ENCODE measurements at regions of chr3 and their contacts with region 1.

Region 1: GRCh38 chr3:49454458-49454857 is 15.6 kb upstream of the DAG1 start:
- DNase-seq: peak in 1 of 14 experiments; percentile 7
- ATAC-seq: no peak
- H3K4me3 ChIP-seq: no peak overlapping the region
- H3K4me3 Mint-ChIP-seq: no peak overlapping the region
- H3K27ac ChIP-seq: no peak overlapping the region
- H3K27ac Mint-ChIP-seq: no peak overlapping the region
- H3K4me1 ChIP-seq: no peaks in the 10 kb centered on the region
- H3K4me1 Mint-ChIP-seq: no peaks in the 10 kb centered on the region
- H3K27me3 ChIP-seq: no peaks in the 10 kb centered on the region
- H3K27me3 Mint-ChIP-seq: no peaks in the 10 kb centered on the region
- CTCF ChIP-seq: no peak

Region 2: DNA sequence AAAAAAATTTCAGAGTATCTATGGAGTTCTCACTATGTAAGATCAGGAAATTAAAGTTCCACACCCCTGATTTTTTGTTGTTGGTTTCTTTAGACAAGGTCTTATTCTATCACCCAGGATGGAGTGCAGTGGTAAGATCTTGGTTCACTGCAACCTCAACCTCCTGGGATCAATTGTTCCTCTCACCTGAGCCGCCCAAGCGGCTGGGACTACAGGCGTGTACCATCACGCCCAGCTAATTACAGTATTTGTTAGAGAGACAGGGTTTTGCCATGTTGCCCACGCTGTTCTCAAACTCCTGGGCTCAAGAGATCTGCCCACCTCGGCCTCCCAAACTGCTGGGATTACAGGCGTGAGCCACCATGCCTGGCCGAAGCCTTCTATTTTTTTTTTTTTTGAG is 373.0 kb before region 1 on chr3:
- CTCF ChIA-PET with region 1: no interaction called
- POLR2A ChIA-PET with region 1: no interaction called
- intact Hi-C with region 1: no loop called
- DNase-seq: no peak
- ATAC-seq: no peak
- H3K4me3 ChIP-seq: no peak overlapping the region
- H3K4me3 Mint-ChIP-seq: no peak overlapping the region
- H3K27ac ChIP-seq: no peak overlapping the region
- H3K27ac Mint-ChIP-seq: no peak overlapping the region
- H3K4me1 ChIP-seq: peaks cover 9% of the 10 kb centered on the region
- H3K4me1 Mint-ChIP-seq: peaks cover 23% of the 10 kb centered on the region
- H3K27me3 ChIP-seq: no peaks in the 10 kb centered on the region
- H3K27me3 Mint-ChIP-seq: no peaks in the 10 kb centered on the region
- CTCF ChIP-seq: no peak

Region 3: DNA sequence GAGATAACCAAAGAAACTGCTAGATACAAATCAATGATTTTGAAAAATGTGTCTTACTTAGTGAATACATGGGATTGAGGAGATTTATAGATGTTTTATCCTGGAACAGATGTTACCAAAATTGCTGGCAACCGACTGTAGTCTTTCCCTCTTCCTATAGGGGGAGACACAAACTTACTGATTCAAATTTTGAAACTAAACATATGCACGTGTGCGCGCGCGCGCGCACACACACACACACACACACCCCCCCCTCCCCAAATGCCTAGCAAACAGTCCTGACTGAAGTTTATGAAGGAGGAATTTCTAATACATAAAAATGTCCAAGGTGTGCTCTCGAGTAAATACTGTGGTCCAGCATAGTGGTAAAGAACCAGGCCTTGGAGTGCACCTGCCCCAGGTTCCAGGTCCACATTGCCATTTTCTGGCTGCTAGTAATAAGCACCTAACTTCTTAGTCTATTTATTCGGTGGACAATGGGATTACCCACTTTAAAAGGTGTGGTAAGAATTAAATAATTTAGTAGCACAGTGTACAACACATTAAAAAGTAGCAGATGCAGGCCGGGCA is 158.9 kb before region 1 on chr3:
- CTCF ChIA-PET with region 1: interaction called, 3 read pairs
- POLR2A ChIA-PET with region 1: no interaction called
- intact Hi-C with region 1: loop called (anchors 1 kb)
- DNase-seq: peak in 13 of 14 experiments; percentile 5 to 67 (median 32)
- ATAC-seq: peak; percentile 81
- H3K4me3 ChIP-seq: no peak overlapping the region
- H3K4me3 Mint-ChIP-seq: no peak overlapping the region
- H3K27ac ChIP-seq: no peak overlapping the region
- H3K27ac Mint-ChIP-seq: peak overlapping the region; percentile 15
- H3K4me1 ChIP-seq: no peaks in the 10 kb centered on the region
- H3K4me1 Mint-ChIP-seq: no peaks in the 10 kb centered on the region
- H3K27me3 ChIP-seq: no peaks in the 10 kb centered on the region
- H3K27me3 Mint-ChIP-seq: no peaks in the 10 kb centered on the region
- CTCF ChIP-seq: peak; percentile 80

Region 4: DNA sequence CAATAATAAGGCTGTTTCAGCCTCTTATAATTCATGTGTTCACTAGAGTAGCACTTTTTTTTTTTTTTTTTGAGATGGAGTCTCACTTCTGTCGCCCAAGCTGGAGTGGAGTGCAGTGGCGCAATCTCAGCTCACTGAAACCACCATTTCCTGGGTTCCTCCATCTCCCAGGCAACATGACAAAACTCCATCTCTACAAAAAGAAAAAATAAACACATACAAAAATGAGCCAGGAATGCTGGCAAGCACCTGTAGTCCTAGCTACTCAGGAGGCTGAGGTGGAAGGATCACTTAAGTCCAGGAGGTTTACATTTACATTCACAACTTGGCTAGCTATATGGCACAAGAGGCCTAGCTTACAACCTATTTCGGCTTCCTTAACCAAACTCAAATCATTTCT is 121.4 kb before region 1 on chr3:
- CTCF ChIA-PET with region 1: interaction called, 7 read pairs
- POLR2A ChIA-PET with region 1: no interaction called
- intact Hi-C with region 1: loop called in 1 of 2 experiments (anchors 2 kb)
- DNase-seq: peak in 6 of 14 experiments; percentile 15 to 65 (median 42)
- ATAC-seq: peak; percentile 83
- H3K4me3 ChIP-seq: no peak overlapping the region
- H3K4me3 Mint-ChIP-seq: peak overlapping the region; percentile 55
- H3K27ac ChIP-seq: peak overlapping the region; percentile 13 to 63
- H3K27ac Mint-ChIP-seq: peak overlapping the region; percentile 88
- H3K4me1 ChIP-seq: peaks cover 29% of the 10 kb centered on the region
- H3K4me1 Mint-ChIP-seq: peaks cover 37% of the 10 kb centered on the region
- H3K27me3 ChIP-seq: no peaks in the 10 kb centered on the region
- H3K27me3 Mint-ChIP-seq: no peaks in the 10 kb centered on the region
- CTCF ChIP-seq: no peak

Region 5: GRCh38 chr3:49553692-49554632 is 99.5 kb after region 1 on chr3 and contains the start of gene BSN:
- CTCF ChIA-PET with region 1: no interaction called
- POLR2A ChIA-PET with region 1: no interaction called
- intact Hi-C with region 1: no loop called
- DNase-seq: peak; percentile 71 to 93 (median 84)
- ATAC-seq: peak; percentile 88
- H3K4me3 ChIP-seq: peak within 1 kb of the TSS; percentile 59
- H3K4me3 Mint-ChIP-seq: peak within 1 kb of the TSS; percentile 90
- H3K27ac ChIP-seq: no peak within 1 kb of the TSS
- H3K27ac Mint-ChIP-seq: no peak within 1 kb of the TSS
- H3K4me1 ChIP-seq: peaks cover 26% of the 10 kb centered on the region
- H3K4me1 Mint-ChIP-seq: peaks cover 18% of the 10 kb centered on the region
- H3K27me3 ChIP-seq: peaks cover 36 to 39% of the 10 kb centered on the region in 2 experiments
- H3K27me3 Mint-ChIP-seq: peaks cover 80% of the 10 kb centered on the region
- CTCF ChIP-seq: no peak
- total RNA-seq, gene BSN: 0.08 to 0.11 TPM